Ascending aorta (tissue), 2 donors: ENCODE measurements at regions of chr9 and their contacts with region 1.

Region 1: DNA sequence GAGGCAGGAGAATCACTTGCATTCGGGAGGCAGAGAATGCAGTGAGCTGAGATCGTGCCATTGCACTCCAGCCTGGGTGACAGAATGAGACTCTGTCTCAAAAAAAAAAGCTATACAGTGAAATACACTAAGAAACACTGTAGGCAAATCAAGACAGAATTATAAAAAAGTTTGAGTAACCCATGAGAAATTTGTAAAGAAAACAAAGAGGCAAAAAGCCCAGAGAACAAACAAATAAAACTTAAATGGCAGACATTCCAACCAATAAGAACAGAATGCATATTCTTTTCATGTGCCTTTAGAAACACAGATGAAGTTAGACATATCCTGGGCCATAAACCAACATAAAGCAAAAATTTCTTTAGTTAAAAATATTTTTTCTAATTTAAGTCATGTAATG is 30.6 kb downstream of the ZNF169 start:
- DNase-seq: no peak
- H3K4me3 ChIP-seq: no peak overlapping the region
- H3K27ac ChIP-seq: peak overlapping the region in 1 of 2 donors; percentile 38
- H3K4me1 ChIP-seq: peaks cover 5 to 21% of the 10 kb centered on the region in 2 donors
- H3K27me3 ChIP-seq: no peaks in the 10 kb centered on the region
- CTCF ChIP-seq: no peak

Region 2: GRCh38 chr9:94259077-94259892 is 30.4 kb before region 1 on chr9 and contains the start of gene ZNF169:
- intact Hi-C with region 1: loop called (anchors 2 kb)
- DNase-seq: peak; percentile 78 to 96
- H3K4me3 ChIP-seq: peak within 1 kb of the TSS; percentile 84 to 98
- H3K27ac ChIP-seq: peak within 1 kb of the TSS; percentile 75 to 85
- H3K4me1 ChIP-seq: peaks cover 0 to 12% of the 10 kb centered on the region in 2 donors
- H3K27me3 ChIP-seq: no peaks in the 10 kb centered on the region
- CTCF ChIP-seq: no peak
- total RNA-seq, gene ZNF169: 19.1 TPM